MCF 10A (cell line): ENCODE measurements at regions of chr16 and their contacts with region 1.

Region 1: GRCh38 chr16:30984669-30985400 is at the start of gene HSD3B7:
- DNase-seq: peak; percentile 80
- H3K4me3 Mint-ChIP-seq: peak within 1 kb of the TSS; percentile 72
- H3K27ac Mint-ChIP-seq: peak within 1 kb of the TSS; percentile 70
- H3K4me1 Mint-ChIP-seq: peaks cover 5% of the 10 kb centered on the region
- H3K27me3 Mint-ChIP-seq: no peaks in the 10 kb centered on the region
- CTCF ChIP-seq: peak; percentile 93
- total RNA-seq, gene HSD3B7: 5.0 and 5.3 TPM in 2 replicates

Region 2: GRCh38 chr16:30850246-30850645 is 134.6 kb before region 1 on chr16:
- CTCF ChIA-PET with region 1: no interaction called
- POLR2A ChIA-PET with region 1: no interaction called
- intact Hi-C with region 1: no loop called
- DNase-seq: no peak
- H3K4me3 Mint-ChIP-seq: no peak overlapping the region
- H3K27ac Mint-ChIP-seq: no peak overlapping the region
- H3K4me1 Mint-ChIP-seq: peaks cover 8% of the 10 kb centered on the region
- H3K27me3 Mint-ChIP-seq: no peaks in the 10 kb centered on the region
- CTCF ChIP-seq: no peak

Region 3: GRCh38 chr16:30997000-30997886 is 12.4 kb after region 1 on chr16:
- CTCF ChIA-PET with region 1: interaction called, 44 read pairs
- POLR2A ChIA-PET with region 1: no interaction called
- intact Hi-C with region 1: no loop called
- DNase-seq: peak; percentile 79
- H3K4me3 Mint-ChIP-seq: peak overlapping the region; percentile 78
- H3K27ac Mint-ChIP-seq: peak overlapping the region; percentile 70
- H3K4me1 Mint-ChIP-seq: peaks cover 11% of the 10 kb centered on the region
- H3K27me3 Mint-ChIP-seq: no peaks in the 10 kb centered on the region
- CTCF ChIP-seq: no peak

Region 4: GRCh38 chr16:31064882-31065461 is 80.1 kb after region 1 on chr16:
- CTCF ChIA-PET with region 1: interaction called, 17 read pairs
- POLR2A ChIA-PET with region 1: interaction called, 4 read pairs
- intact Hi-C with region 1: no loop called
- DNase-seq: peak; percentile 51
- H3K4me3 Mint-ChIP-seq: peak overlapping the region; percentile 38
- H3K27ac Mint-ChIP-seq: peak overlapping the region; percentile 94
- H3K4me1 Mint-ChIP-seq: peaks cover 22% of the 10 kb centered on the region
- H3K27me3 Mint-ChIP-seq: no peaks in the 10 kb centered on the region
- CTCF ChIP-seq: no peak

Region 5: GRCh38 chr16:31084616-31085260 is 99.9 kb after region 1 on chr16:
- CTCF ChIA-PET with region 1: interaction called, 13 read pairs
- POLR2A ChIA-PET with region 1: no interaction called
- intact Hi-C with region 1: no loop called
- DNase-seq: no peak
- H3K4me3 Mint-ChIP-seq: no peak overlapping the region
- H3K27ac Mint-ChIP-seq: no peak overlapping the region
- H3K4me1 Mint-ChIP-seq: peaks cover 6% of the 10 kb centered on the region
- H3K27me3 Mint-ChIP-seq: no peaks in the 10 kb centered on the region
- CTCF ChIP-seq: no peak

Region 6: DNA sequence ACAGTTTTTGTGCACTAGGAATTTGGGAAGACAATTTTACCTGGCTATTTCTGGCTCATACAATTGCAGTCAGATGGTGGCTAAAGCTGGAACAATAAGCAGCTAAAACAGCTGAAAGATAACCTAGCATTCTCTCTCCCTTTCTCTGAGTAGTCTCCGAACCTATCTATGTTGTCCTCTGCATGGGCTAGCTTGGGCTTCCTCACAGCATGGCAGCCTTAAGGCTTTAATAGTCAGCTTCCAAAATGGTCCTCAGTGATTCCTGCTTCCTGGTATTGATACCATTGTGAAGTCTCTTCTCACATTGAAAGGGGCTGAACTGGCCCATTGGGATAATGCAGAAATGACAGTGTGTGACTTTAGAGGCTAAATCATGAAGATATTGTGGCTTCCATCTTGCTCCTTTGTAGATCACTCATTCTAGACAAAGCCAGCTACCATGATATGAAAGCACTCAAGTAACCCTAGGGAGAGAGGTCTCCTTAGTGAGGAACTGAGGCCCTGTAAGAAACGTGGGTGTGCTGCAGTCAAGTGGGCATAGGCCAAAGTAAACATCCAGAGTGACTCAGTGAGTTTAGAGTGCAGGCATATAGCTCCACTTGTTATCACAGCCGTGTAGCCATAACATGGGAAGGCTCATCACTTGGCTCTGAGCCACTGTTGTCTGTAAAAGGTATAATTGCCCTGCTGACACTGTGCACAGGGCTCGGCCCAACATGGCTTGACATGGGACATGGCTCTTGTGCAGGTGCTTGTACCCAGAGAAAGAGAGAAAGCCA is 115.2 kb after region 1 on chr16:
- CTCF ChIA-PET with region 1: interaction called, 27 read pairs
- POLR2A ChIA-PET with region 1: interaction called, 3 read pairs
- intact Hi-C with region 1: loop called (anchors 1 kb)
- DNase-seq: peak; percentile 52
- H3K4me3 Mint-ChIP-seq: no peak overlapping the region
- H3K27ac Mint-ChIP-seq: no peak overlapping the region
- H3K4me1 Mint-ChIP-seq: peaks cover 11% of the 10 kb centered on the region
- H3K27me3 Mint-ChIP-seq: no peaks in the 10 kb centered on the region
- CTCF ChIP-seq: no peak

Region 7: DNA sequence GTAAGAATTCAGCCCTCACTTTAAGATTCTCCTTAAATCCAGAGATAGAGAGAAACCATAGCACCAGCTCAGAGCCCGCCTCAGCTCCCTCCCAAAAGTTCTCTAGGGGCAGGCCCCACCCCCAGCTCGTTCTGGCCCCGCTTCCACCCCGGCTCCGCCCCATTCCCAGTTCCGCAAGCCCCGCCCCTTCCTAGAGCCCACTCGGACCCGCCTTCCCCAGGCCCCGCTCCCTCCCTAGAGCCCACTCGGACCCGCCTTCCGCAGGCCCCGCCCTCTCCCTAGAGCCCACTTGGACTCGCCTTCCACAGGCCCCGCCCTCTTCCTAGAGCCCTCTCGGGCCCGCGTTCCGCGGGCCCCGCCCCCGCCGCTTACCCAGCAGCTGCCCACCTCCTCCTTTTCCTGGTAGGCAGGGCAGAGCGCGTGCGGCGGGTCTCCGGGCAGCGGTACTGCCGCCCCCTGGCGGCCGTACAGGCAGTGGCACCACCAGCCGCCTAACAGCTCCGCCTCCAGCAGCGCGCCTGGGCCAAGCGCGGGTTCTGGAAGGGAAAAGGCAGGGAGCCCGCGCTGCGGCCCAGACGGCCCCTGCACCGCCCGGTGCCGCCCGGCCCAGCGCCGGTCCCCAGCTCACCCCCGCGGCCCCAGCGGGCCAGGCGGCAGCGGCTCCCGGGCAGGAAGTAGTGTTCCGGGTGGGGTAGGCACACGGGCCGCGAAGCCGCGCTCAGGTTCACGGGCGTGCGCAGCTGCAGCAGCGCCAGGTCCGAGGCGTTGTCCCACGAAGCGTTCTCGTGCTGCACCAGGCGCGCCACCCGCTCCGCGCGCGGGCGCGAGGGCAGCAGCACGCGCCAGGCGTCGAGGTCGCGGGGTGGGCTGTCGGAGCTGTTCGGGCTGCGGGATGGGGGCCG is 157.5 kb after region 1 on chr16:
- CTCF ChIA-PET with region 1: interaction called, 25 read pairs
- POLR2A ChIA-PET with region 1: interaction called, 5 read pairs
- intact Hi-C with region 1: loop called (anchors 1 kb)
- DNase-seq: peak; percentile 99
- H3K4me3 Mint-ChIP-seq: peak overlapping the region; percentile 71
- H3K27ac Mint-ChIP-seq: peak overlapping the region; percentile 91
- H3K4me1 Mint-ChIP-seq: peaks cover 21% of the 10 kb centered on the region
- H3K27me3 Mint-ChIP-seq: no peaks in the 10 kb centered on the region
- CTCF ChIP-seq: peak; percentile 90

Region 8: GRCh38 chr16:31861455-31861854 is 876.6 kb after region 1 on chr16:
- CTCF ChIA-PET with region 1: interaction called, 10 read pairs
- POLR2A ChIA-PET with region 1: no interaction called
- intact Hi-C with region 1: no loop called
- DNase-seq: no peak
- H3K4me3 Mint-ChIP-seq: no peak overlapping the region
- H3K27ac Mint-ChIP-seq: no peak overlapping the region
- H3K4me1 Mint-ChIP-seq: no peaks in the 10 kb centered on the region
- H3K27me3 Mint-ChIP-seq: peaks cover 38% of the 10 kb centered on the region
- CTCF ChIP-seq: no peak